ENCODE measurements at regions of chr18 and their contacts with region 1.

Region 1: DNA sequence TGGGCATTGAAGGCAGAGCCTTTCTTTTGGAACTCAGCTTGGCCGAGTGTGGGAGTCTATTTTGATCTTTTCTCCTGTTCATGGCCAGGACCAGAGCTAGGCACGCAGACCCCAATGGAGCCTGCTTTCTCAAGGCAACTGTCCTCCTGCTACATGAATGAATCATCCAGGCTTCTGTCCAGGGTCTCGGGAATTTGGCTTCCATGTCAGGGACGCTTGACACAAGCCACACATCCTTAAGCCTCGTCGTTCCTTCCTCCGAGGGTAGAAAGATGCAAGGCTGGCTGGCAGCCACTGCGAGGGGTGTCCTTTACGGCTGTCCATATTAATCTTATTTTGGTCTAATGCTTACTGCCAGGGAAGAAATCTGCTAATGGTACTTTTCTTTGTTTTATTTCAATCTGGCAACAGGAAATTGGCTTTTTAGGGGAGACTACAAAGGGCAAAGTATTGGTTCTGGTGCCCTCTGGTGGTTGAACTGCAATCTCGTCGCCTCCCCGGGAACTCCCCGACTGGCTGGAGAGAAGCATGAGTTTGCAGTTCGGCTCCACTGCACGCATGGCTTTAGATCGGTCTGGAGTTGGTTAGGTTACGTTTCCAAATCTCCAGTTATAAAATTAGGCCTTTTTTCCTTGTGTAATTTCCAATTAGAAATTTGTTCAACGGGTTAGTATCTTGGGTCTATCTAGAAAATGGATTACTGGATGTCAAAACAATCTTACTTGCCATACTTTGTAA is 135.2 kb downstream of the ALPK2 start:
- DNase-seq: peak; percentile 54 to 86
- H3K4me3 ChIP-seq: no peak overlapping the region
- H3K27ac ChIP-seq: no peak overlapping the region
- H3K4me1 ChIP-seq: peaks cover 0 to 3% (median 1%) of the 10 kb centered on the region in 4 experiments; a peak in 3 of 7 replicates
- H3K27me3 ChIP-seq: no peaks in the 10 kb centered on the region
- CTCF ChIP-seq: peak; percentile 80 to 88 (median 88)
- EP300 ChIP-seq: no peak
- POLR2A ChIP-seq: no peak
- RAD21 ChIP-seq: peak; percentile 89 to 93

Region 2: DNA sequence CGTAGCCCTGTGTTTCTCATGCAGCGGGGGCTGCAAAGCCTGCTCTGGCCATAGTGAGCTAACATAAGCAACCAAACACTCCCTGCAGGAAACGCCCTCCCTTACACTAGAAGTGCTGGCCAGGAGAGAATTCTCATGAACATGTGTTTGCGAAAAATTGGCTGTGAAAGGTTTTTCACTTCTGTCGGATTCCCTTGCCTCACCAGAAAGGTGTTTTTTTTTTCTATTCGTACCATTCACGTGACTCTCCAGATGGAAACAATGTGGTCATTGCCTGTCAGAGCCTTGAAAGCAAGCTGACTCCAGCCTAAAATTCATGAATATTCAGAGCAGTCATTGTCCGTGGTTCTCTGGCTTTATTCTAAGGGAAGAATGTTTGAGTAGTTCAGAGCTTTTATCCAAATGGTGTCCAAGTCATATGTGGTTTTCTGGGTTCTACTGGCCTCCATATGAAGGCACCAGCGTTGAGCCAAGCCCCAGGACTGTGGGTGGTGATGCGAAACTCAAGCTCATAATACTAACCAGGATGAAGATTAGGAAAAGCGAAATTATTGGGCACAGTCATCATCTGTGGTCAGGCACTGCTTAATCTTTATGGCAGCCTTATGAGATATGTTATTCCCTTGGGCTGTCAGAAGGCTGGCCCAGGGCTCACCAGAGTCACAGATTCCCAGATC is 101.2 kb before region 1 on chr18:
- CTCF ChIA-PET with region 1: interaction called, 62 read pairs
- POLR2A ChIA-PET with region 1: no interaction called
- DNase-seq: no peak
- H3K4me3 ChIP-seq: no peak overlapping the region
- H3K27ac ChIP-seq: no peak overlapping the region
- H3K4me1 ChIP-seq: peaks cover 0 to 7% (median 0%) of the 10 kb centered on the region in 4 experiments; a peak in 3 of 7 replicates
- H3K27me3 ChIP-seq: no peaks in the 10 kb centered on the region
- CTCF ChIP-seq: no peak
- EP300 ChIP-seq: no peak
- POLR2A ChIP-seq: no peak
- RAD21 ChIP-seq: no peak

Region 3: DNA sequence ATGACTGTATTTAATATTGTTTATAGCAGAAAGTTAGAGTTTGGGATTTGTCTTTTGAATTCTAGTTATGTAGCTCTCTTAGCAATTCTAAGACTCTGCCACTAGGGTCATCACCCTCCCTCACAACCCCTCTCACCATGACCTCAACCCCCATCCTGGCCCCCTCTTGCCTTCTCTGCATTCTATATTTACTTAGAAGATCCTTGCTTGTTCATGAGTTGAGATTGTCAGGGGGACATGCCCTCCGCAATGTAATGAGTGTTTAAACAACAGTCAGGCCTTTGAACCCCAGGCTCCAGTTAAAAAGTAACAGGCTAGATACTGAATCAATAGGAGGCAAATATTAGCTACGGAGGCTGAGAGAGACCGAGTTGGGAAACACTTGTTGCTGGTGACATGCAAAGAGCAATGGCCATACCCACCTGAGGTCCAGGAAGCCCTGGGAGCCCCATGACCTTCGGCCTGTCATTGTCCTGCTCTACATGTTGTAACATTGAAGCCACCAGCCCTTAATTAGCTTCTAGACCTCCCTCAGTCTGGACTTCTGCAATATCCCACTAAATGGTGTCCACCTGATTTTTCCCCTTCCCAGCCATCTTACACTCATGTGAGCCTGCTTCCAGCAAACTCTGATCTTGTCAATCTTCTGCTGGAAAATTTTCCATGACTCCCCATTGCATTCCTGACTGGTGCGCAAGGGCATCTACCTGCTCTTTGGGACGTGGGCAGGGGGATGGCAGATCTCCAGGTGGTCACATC is 85.9 kb before region 1 on chr18:
- CTCF ChIA-PET with region 1: interaction called, 39 read pairs
- POLR2A ChIA-PET with region 1: interaction called, 4 read pairs
- DNase-seq: no peak
- H3K4me3 ChIP-seq: no peak overlapping the region
- H3K27ac ChIP-seq: no peak overlapping the region
- H3K4me1 ChIP-seq: peaks cover 0 to 3% (median 1%) of the 10 kb centered on the region in 4 experiments; a peak in 5 of 7 replicates
- H3K27me3 ChIP-seq: no peaks in the 10 kb centered on the region
- CTCF ChIP-seq: peak; percentile 1 to 28 (median 15); a peak in 3 of 4 replicates
- EP300 ChIP-seq: no peak
- POLR2A ChIP-seq: no peak
- RAD21 ChIP-seq: peak in 1 of 2 experiments; percentile 31; a peak in 1 of 4 replicates

Region 4: GRCh38 chr18:58455314-58456188 is 38.1 kb before region 1 on chr18:
- CTCF ChIA-PET with region 1: interaction called, 19 read pairs
- POLR2A ChIA-PET with region 1: no interaction called
- DNase-seq: no peak
- H3K4me3 ChIP-seq: no peak overlapping the region
- H3K27ac ChIP-seq: no peak overlapping the region
- H3K4me1 ChIP-seq: no peaks in the 10 kb centered on the region
- H3K27me3 ChIP-seq: no peaks in the 10 kb centered on the region
- CTCF ChIP-seq: no peak
- EP300 ChIP-seq: no peak
- POLR2A ChIP-seq: no peak
- RAD21 ChIP-seq: no peak

Region 5: DNA sequence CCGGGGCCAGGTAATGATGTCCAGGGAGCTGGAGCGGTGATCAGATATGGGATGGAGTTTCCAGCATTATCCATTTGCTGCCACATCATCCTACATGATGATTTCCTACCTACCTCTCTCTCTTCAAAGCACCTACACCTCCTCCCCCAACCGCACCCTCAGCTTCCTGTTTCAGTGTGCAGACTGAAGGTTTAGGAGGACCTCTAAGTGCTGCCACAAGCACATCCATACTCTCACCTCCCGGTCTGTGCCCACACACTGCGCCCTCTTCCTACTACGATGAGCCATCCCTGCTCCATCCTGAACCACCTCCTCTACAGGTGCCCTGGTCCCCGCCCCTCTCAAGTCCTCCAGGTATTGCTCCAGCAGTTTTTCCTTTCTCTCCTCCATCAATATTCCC is 11.5 kb after region 1 on chr18:
- CTCF ChIA-PET with region 1: interaction called, 15 read pairs
- POLR2A ChIA-PET with region 1: no interaction called
- DNase-seq: no peak
- H3K4me3 ChIP-seq: no peak overlapping the region
- H3K27ac ChIP-seq: no peak overlapping the region
- H3K4me1 ChIP-seq: peaks cover 0 to 4% (median 2%) of the 10 kb centered on the region in 4 experiments; a peak in 1 of 7 replicates
- H3K27me3 ChIP-seq: no peaks in the 10 kb centered on the region
- CTCF ChIP-seq: no peak
- EP300 ChIP-seq: no peak
- POLR2A ChIP-seq: no peak
- RAD21 ChIP-seq: no peak

Region 6: GRCh38 chr18:58520969-58521368 is 27.3 kb after region 1 on chr18:
- CTCF ChIA-PET with region 1: interaction called, 22 read pairs
- POLR2A ChIA-PET with region 1: no interaction called
- DNase-seq: no peak
- H3K4me3 ChIP-seq: no peak overlapping the region
- H3K27ac ChIP-seq: no peak overlapping the region
- H3K4me1 ChIP-seq: no peaks in the 10 kb centered on the region
- H3K27me3 ChIP-seq: no peaks in the 10 kb centered on the region
- CTCF ChIP-seq: no peak
- EP300 ChIP-seq: no peak
- POLR2A ChIP-seq: no peak
- RAD21 ChIP-seq: no peak

Region 7: DNA sequence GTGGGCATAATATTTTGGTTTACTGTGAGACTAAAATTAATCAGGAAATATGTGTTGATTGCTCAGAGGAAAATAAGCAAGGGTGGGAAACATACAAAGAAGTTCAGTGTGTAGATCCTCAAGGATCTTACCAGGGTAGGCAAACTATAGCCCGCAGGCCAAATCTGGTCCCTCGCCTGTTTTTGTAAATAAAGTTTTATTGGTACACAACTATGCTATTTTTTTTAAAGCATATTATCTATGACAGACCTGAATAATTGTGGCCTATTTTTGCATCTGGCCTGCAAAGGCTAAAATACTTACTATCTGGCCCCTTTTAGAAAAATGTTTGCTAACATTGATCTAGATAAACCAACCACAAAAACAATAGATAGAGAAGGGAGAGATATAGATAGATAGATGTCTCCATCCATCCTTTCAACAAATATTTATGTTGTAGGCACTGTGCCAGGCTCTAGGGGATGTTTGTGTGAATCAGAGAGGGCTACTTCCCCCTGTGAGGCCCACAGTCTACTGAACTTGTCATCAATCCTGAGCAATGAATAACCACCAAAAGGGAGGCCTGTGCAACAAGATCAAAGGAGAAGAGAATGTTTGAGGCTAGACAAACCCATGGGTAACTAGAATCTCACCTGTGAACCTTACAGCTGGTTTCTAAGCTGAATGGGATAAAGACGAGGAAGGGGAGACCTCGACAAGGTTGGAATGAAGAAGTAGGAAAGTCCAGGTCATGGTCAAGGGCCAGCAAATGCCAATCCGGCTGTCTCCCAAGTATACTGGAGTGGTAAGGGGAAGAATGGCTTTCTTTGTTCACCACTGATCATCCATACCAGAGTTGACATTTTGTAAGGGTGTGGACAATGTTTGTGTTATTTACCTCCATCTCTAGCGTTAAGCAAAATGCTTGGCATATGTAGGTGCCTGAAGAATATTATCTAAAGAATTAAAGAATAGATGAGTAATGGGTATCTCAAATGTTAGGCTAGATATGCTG is 111.6 kb after region 1 on chr18:
- CTCF ChIA-PET with region 1: no interaction called
- POLR2A ChIA-PET with region 1: no interaction called
- DNase-seq: no peak
- H3K4me3 ChIP-seq: no peak overlapping the region
- H3K27ac ChIP-seq: no peak overlapping the region
- H3K4me1 ChIP-seq: peaks cover 0 to 10% (median 5%) of the 10 kb centered on the region in 4 experiments; a peak in 4 of 7 replicates
- H3K27me3 ChIP-seq: no peaks in the 10 kb centered on the region
- CTCF ChIP-seq: no peak
- EP300 ChIP-seq: no peak
- POLR2A ChIP-seq: no peak
- RAD21 ChIP-seq: no peak

Region 8: GRCh38 chr18:58649966-58650816 is 156.5 kb after region 1 on chr18:
- CTCF ChIA-PET with region 1: no interaction called
- POLR2A ChIA-PET with region 1: no interaction called
- DNase-seq: no peak
- H3K4me3 ChIP-seq: no peak overlapping the region
- H3K27ac ChIP-seq: no peak overlapping the region
- H3K4me1 ChIP-seq: no peaks in the 10 kb centered on the region
- H3K27me3 ChIP-seq: no peaks in the 10 kb centered on the region
- CTCF ChIP-seq: no peak
- EP300 ChIP-seq: no peak
- POLR2A ChIP-seq: no peak
- RAD21 ChIP-seq: no peak

Measured in H1 (cell line).